HEK293 (cell line): ENCODE measurements at regions of chr16 and their contacts with region 1.

Region 1: GRCh38 chr16:2520092-2520783 is at the start of gene AMDHD2:
- H3K4me3 ChIP-seq: peak within 1 kb of the TSS; percentile 68
- H3K27ac ChIP-seq: peak within 1 kb of the TSS; percentile 41; the same call in 1 of the 2 replicates
- H3K4me1 ChIP-seq: peaks cover 3% of the 10 kb centered on the region
- CTCF ChIP-seq: no peak

Region 2: GRCh38 chr16:2508722-2509400 is 11.4 kb before region 1 on chr16:
- CTCF ChIA-PET with region 1: no interaction called
- POLR2A ChIA-PET with region 1: no interaction called
- H3K4me3 ChIP-seq: no peak overlapping the region
- H3K27ac ChIP-seq: no peak overlapping the region
- H3K4me1 ChIP-seq: no peaks in the 10 kb centered on the region
- CTCF ChIP-seq: no peak

Region 3: DNA sequence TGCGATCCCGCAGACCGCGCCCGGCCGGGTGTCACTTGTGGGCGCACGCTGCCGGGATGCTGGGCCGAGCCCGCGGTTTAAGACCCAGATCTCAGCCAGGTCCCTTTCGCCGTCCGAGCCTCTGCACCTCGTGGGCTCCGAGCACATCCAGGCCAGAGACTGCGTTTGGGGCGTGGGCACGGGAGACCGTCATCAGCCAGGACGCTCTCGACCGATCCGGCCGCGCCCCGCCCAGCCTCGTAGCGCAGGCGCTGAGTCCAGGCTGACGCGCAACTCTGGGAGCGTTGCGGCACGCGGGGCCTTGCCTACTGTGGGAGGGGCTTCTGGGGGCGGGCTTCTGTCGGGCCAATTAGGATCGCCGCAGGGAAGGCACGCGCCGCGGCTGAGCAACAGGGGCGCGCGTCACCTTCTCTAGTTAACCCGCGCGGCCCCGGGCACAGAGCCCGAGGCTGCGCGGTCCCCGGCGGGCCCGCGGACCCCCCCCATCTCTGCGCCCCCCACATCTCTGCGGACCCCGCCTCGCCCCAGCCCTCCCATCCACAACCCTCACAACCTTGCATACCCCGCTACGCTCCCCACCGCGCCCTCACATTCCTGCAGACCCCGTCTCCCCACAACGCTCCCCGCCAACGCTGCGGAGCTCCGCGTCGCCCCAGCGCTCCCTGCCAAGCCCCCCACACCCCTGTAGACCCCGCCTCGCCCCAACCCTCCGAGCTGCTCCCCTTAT is 11.7 kb after region 1 on chr16:
- CTCF ChIA-PET with region 1: interaction called, 3 read pairs
- POLR2A ChIA-PET with region 1: interaction called, 25 read pairs
- H3K4me3 ChIP-seq: peak overlapping the region; percentile 44
- H3K27ac ChIP-seq: peak overlapping the region; percentile 28; the same call in 1 of the 2 replicates
- H3K4me1 ChIP-seq: peaks cover 3% of the 10 kb centered on the region; the same call in 1 of the 2 replicates
- CTCF ChIP-seq: no peak